ENCODE measurements at regions of chr1 and their contacts with region 1.

Region 1: GRCh38 chr1:150259758-150260669 is 2.4 kb downstream of the CA14 start:
- DNase-seq: peak; percentile 89
- H3K4me3 Mint-ChIP-seq: peak overlapping the region; percentile 64
- H3K27ac Mint-ChIP-seq: peak overlapping the region; percentile 47
- H3K4me1 Mint-ChIP-seq: peaks cover 66% of the 10 kb centered on the region
- H3K27me3 Mint-ChIP-seq: no peaks in the 10 kb centered on the region
- CTCF ChIP-seq: no peak

Region 2: DNA sequence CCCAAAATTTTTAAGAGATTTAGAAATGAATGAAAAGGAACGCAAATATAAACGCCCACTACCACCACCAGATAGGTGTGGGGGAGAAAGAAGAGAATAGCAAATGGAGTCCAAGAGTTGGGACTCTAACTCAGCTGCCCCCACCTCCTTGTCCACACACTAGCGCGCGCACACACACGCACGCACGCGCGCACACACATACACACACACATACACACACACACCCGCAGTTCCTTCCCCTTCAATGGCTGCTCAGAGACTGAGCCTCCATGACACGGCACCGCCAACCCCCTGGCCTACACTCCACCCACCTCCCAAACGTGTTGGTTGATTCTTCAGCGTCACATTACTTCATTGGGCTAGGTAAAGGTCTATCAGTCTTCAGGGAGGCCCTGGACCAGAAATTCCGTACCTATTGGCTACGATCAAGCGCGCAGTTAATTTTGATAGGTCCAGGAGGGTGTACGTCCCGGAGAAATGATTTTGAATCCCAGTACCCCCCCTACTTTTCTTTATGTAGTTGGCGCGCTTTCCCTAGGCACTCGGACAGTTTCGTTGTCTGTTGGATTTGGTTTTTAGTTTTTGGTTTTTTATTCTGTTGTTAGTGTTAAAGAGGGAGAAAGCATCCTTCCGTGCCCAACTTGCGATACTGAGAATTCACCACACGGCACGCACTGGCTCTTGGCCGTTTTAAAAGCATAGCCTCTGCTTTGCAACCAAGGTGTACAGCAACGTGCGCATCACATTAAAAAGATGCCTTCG is 24.0 kb before region 1 on chr1 and contains the start of gene ANP32E:
- CTCF ChIA-PET with region 1: interaction called, 34 read pairs
- POLR2A ChIA-PET with region 1: interaction called, 27 read pairs
- intact Hi-C with region 1: no loop called
- DNase-seq: peak; percentile 100
- H3K4me3 Mint-ChIP-seq: no peak within 1 kb of the TSS
- H3K27ac Mint-ChIP-seq: no peak within 1 kb of the TSS
- H3K4me1 Mint-ChIP-seq: peaks cover 11% of the 10 kb centered on the region
- H3K27me3 Mint-ChIP-seq: no peaks in the 10 kb centered on the region
- CTCF ChIP-seq: no peak
- total RNA-seq, gene ANP32E: 56.5 and 67.3 TPM in 2 replicates

Region 3: GRCh38 chr1:150281837-150282653 is 22.0 kb after region 1 on chr1 and contains the start of gene CIART:
- CTCF ChIA-PET with region 1: interaction called, 215 read pairs
- POLR2A ChIA-PET with region 1: interaction called, 239 read pairs
- intact Hi-C with region 1: loop called (anchors 1 kb)
- DNase-seq: peak; percentile 99
- H3K4me3 Mint-ChIP-seq: peak within 1 kb of the TSS; percentile 83
- H3K27ac Mint-ChIP-seq: peak within 1 kb of the TSS; percentile 94
- H3K4me1 Mint-ChIP-seq: peaks cover 43% of the 10 kb centered on the region
- H3K27me3 Mint-ChIP-seq: no peaks in the 10 kb centered on the region
- CTCF ChIP-seq: no peak
- total RNA-seq, gene CIART: 5.0 and 5.2 TPM in 2 replicates

Region 4: DNA sequence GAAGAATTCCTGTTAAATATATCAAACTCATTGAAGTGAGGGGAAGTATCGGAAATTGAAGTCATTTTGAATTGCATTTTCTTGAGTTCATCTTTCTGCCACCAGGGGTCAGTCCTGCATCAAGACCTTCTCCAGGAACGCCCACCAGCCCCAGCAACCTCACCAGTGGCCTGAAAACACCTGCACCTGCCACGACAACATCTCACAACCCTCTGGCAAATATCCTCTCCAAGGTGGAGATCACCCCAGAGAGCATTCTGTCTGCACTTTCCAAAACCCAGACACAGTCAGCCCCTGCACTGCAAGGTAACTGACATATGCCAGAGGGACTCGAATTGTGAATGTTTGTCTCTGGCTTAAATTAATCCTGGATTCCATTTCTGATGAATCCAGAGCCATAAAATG is 204.4 kb after region 1 on chr1:
- CTCF ChIA-PET with region 1: interaction called, 6 read pairs
- POLR2A ChIA-PET with region 1: interaction called, 5 read pairs
- intact Hi-C with region 1: loop called (anchors 5 kb)
- DNase-seq: peak; percentile 72
- H3K4me3 Mint-ChIP-seq: no peak overlapping the region
- H3K27ac Mint-ChIP-seq: no peak overlapping the region
- H3K4me1 Mint-ChIP-seq: no peaks in the 10 kb centered on the region
- H3K27me3 Mint-ChIP-seq: no peaks in the 10 kb centered on the region
- CTCF ChIP-seq: peak; percentile 80

Region 5: GRCh38 chr1:150548632-150549495 is 288.9 kb after region 1 on chr1 and contains the start of gene ADAMTSL4:
- CTCF ChIA-PET with region 1: interaction called, 6 read pairs
- POLR2A ChIA-PET with region 1: interaction called, 8 read pairs
- intact Hi-C with region 1: loop called (anchors 5 kb)
- DNase-seq: peak; percentile 80
- H3K4me3 Mint-ChIP-seq: peak within 1 kb of the TSS; percentile 81
- H3K27ac Mint-ChIP-seq: peak within 1 kb of the TSS; percentile 78
- H3K4me1 Mint-ChIP-seq: peaks cover 28% of the 10 kb centered on the region
- H3K27me3 Mint-ChIP-seq: no peaks in the 10 kb centered on the region
- CTCF ChIP-seq: peak; percentile 15
- total RNA-seq, gene ADAMTSL4: 9.6 and 13.3 TPM in 2 replicates

Measured in MCF 10A (cell line).